ENCODE measurements at regions of chr7 and their contacts with region 1.

Region 1: GRCh38 chr7:104923010-104923421 is 91.0 kb upstream of the KMT2E start:
- DNase-seq: peak; percentile 91
- H3K4me3 ChIP-seq: no peak overlapping the region
- H3K27ac ChIP-seq: peak overlapping the region; percentile 12
- H3K4me1 ChIP-seq: peaks cover 10% of the 10 kb centered on the region
- H3K27me3 ChIP-seq: no peaks in the 10 kb centered on the region
- CTCF ChIP-seq: peak; percentile 86

Region 2: DNA sequence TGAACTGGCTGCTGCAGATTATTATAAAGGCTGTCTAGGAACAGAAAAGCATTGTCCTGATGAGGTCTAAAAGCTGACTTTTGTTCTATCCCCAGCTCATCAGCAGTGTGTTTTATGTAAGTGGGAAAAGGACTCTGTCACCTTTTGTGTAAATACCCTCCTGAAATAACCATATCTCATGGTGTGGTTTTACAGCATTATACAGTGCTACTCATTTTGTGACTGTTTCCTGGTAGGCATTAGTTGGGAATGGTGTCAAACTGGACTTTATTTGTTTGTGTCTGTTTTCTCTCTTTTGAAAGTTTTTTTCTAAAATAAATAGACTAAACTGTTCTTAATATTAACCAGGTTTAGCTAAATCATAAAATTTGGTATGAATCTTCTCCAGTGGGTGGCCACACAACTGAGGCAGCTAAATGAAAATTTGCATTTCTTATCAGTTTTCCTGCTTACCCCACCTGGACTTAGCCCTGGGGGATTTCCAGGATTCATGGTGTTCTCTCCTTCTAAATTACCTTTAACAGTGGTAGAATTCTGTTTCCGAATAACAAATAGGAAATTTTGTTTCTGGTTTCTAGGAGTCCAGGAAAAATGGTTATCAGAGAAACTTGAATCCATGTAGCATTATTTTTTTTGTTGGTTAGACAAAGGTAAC is 453.7 kb before region 1 on chr7:
- CTCF ChIA-PET with region 1: no interaction called
- POLR2A ChIA-PET with region 1: no interaction called
- intact Hi-C with region 1: no loop called
- DNase-seq: no peak
- H3K4me3 ChIP-seq: no peak overlapping the region
- H3K27ac ChIP-seq: no peak overlapping the region
- H3K4me1 ChIP-seq: no peaks in the 10 kb centered on the region
- H3K27me3 ChIP-seq: peaks cover 15% of the 10 kb centered on the region
- CTCF ChIP-seq: no peak

Region 3: DNA sequence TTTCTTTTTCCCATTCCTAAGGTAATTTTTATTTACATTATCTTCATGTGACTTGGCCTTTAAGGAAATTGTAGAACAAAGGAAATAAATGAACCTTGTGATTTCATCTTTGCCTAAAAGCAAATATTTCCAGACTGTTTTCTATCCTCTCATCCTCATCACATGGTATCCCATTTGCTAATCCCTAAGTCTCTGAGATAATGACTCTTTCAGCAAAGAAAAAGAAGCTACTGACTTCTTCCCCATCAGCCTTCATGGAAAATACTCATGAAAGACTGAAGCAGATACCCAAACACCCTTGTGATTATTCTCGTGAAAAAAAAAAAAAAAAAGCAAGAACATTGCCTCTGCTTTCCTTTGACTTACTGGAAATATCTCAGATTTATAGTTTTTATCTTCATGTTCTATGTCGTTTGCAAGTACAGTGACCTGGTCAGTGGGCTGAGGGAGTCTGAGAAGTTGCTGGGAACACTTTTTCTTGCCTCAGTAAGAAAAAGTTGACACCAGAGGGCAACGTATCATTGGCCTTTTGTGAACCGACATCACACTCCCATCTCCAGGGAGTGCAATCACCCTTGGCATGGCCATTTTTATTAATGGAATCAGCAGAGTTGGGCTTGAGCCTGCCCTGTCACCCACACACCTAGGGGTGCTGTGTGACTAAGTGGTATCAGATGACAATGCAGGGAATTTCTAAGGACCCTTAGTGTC is 155.0 kb before region 1 on chr7:
- CTCF ChIA-PET with region 1: no interaction called
- POLR2A ChIA-PET with region 1: no interaction called
- intact Hi-C with region 1: no loop called
- DNase-seq: no peak
- H3K4me3 ChIP-seq: no peak overlapping the region
- H3K27ac ChIP-seq: no peak overlapping the region
- H3K4me1 ChIP-seq: no peaks in the 10 kb centered on the region
- H3K27me3 ChIP-seq: peaks cover 59% of the 10 kb centered on the region
- CTCF ChIP-seq: no peak

Region 4: DNA sequence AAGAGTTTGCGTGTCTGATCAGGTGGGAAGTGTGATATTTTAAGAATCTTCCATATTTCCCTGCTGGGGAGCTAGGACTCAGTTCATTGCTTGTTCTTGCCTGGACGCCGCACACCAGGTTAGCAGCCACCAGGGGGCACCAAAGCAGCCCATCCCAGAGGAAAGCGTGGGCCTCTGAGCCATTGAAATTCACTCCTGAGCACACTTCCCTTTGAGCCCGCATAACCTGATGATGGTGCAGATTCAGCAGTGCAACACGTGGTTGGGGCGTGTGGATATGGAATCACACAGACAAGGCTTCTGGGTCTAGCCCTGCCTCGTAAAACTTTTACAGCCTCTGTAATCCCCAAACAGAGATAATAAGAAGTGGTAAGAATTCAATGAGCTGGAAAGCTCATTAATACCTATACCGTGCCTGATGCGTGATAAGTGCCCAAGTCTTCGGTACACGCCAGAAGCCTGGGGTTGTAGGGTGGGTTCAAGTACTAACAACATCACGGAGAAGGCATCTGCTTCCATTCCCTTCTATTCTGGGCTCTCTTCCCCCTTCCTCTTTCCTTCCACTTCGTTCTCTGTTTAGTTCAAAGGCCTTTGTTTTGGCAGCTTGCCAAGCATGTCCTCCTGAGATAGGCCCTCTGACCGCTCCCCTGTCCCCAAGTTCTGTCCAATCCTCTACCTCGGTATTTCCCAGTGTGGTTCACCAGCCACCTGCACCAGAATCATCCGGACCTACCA is 39.1 kb before region 1 on chr7:
- CTCF ChIA-PET with region 1: interaction called, 28 read pairs
- POLR2A ChIA-PET with region 1: no interaction called
- intact Hi-C with region 1: loop called (anchors 2 kb)
- DNase-seq: peak; percentile 95
- H3K4me3 ChIP-seq: no peak overlapping the region
- H3K27ac ChIP-seq: no peak overlapping the region
- H3K4me1 ChIP-seq: peaks cover 22% of the 10 kb centered on the region
- H3K27me3 ChIP-seq: no peaks in the 10 kb centered on the region
- CTCF ChIP-seq: peak; percentile 98

Region 5: GRCh38 chr7:105106473-105106872 is 183.5 kb after region 1 on chr7:
- CTCF ChIA-PET with region 1: no interaction called
- POLR2A ChIA-PET with region 1: no interaction called
- intact Hi-C with region 1: loop called (anchors 5 kb)
- DNase-seq: peak; percentile 11
- H3K4me3 ChIP-seq: no peak overlapping the region
- H3K27ac ChIP-seq: peak overlapping the region; percentile 64
- H3K4me1 ChIP-seq: peaks cover 16% of the 10 kb centered on the region
- H3K27me3 ChIP-seq: no peaks in the 10 kb centered on the region
- CTCF ChIP-seq: no peak

Region 6: DNA sequence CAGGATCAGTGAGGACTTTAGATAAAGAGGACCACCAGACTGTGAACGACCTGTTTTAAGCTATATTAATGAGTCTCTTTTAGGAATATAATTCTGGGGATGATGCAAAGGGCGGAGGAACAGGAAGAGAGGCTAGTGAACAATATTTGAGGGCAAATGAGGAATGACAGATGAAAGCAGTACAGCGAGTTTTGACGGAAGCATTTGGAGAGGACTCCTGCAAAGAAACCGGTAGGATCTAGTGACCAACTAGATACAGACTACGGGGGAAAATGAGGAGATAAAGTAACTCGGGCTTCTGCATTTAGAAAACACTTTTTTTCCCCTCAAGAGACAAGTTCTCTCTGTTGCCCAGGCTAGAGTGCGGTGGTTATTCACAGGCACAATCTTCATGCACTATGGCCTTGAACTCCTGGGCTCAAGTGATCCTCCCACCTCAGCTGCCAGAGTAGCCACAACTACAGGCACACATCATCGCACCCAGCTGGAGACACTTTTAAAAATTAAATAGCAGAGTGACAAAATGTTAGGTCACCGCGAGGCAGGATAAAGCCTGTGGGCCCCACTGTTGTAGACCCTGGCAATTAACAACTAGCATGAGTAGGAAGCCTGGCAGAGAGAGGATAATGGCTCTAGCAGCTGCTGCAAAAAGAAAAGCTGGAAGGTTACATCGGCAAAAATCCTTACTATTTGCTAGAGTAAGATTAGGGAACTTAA is 322.5 kb after region 1 on chr7:
- CTCF ChIA-PET with region 1: no interaction called
- POLR2A ChIA-PET with region 1: no interaction called
- intact Hi-C with region 1: no loop called
- DNase-seq: peak; percentile 70
- H3K4me3 ChIP-seq: peak overlapping the region; percentile 6
- H3K27ac ChIP-seq: peak overlapping the region; percentile 39
- H3K4me1 ChIP-seq: peaks cover 29% of the 10 kb centered on the region
- H3K27me3 ChIP-seq: no peaks in the 10 kb centered on the region
- CTCF ChIP-seq: no peak

Region 7: GRCh38 chr7:105589356-105590077 is 666.5 kb after region 1 on chr7:
- CTCF ChIA-PET with region 1: interaction called, 3 read pairs
- POLR2A ChIA-PET with region 1: no interaction called
- intact Hi-C with region 1: loop called (anchors 2 kb)
- DNase-seq: peak; percentile 91
- H3K4me3 ChIP-seq: no peak overlapping the region
- H3K27ac ChIP-seq: no peak overlapping the region
- H3K4me1 ChIP-seq: no peaks in the 10 kb centered on the region
- H3K27me3 ChIP-seq: no peaks in the 10 kb centered on the region
- CTCF ChIP-seq: peak; percentile 83